CD8-positive, alpha-beta T cell (primary cell): ENCODE measurements at regions of chr11 and their contacts with region 1.

Region 1: GRCh38 chr11:96134602-96135001 is 208.4 kb downstream of the MAML2 start:
- DNase-seq: peak in 2 of 9 experiments; percentile 33 to 65
- ATAC-seq: peak; percentile 17
- H3K4me3 ChIP-seq: no peak overlapping the region
- H3K4me3 Mint-ChIP-seq: no peak overlapping the region
- H3K27ac ChIP-seq: peak overlapping the region in 1 of 2 experiments; percentile 2
- H3K27ac Mint-ChIP-seq: peak overlapping the region; percentile 75
- H3K4me1 ChIP-seq: peaks cover 33% of the 10 kb centered on the region
- H3K4me1 Mint-ChIP-seq: peaks cover 65% of the 10 kb centered on the region
- H3K27me3 ChIP-seq: no peaks in the 10 kb centered on the region
- H3K27me3 Mint-ChIP-seq: no peaks in the 10 kb centered on the region
- CTCF ChIP-seq: no peak

Region 2: DNA sequence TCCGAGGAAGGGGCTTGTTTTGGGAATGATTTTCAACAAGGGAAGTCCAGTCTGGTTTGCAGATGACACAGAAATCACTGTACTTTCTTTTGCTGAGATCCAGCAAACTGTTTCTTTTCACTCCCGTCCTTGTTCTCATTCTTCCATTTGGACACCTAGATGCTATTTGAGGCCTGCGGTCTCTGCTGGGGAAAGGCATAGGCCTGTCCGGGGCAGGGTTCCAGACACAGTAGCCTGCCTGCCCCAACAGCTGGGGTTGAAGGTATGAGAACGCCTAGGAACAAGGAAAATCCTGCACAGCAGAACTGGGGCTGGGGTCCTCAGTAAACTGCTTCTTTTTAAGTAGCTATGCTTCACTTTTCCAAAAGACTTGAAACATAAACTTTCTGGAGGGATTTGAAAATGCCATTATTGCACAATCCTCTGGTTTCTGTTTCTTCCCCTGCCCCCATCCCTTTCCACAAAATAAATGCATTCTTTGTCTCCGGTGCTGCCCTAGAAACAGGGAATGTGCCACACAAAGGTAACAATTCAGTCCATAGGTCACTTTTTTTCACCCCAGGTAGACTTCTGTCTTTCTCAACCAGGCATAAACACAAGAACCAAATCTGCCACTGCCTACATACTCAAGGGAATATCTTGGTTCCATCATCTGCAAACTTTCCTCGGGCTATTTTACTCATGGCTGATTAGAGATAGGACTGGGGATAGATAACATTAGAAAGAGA is 35.9 kb before region 1 on chr11:
- CTCF ChIA-PET with region 1: no interaction called
- POLR2A ChIA-PET with region 1: no interaction called
- intact Hi-C with region 1: loop called in 1 of 2 experiments (anchors 5 kb)
- DNase-seq: no peak
- ATAC-seq: no peak
- H3K4me3 ChIP-seq: no peak overlapping the region
- H3K4me3 Mint-ChIP-seq: no peak overlapping the region
- H3K27ac ChIP-seq: no peak overlapping the region
- H3K27ac Mint-ChIP-seq: peak overlapping the region; percentile 80
- H3K4me1 ChIP-seq: no peaks in the 10 kb centered on the region
- H3K4me1 Mint-ChIP-seq: peaks cover 63% of the 10 kb centered on the region
- H3K27me3 ChIP-seq: no peaks in the 10 kb centered on the region
- H3K27me3 Mint-ChIP-seq: no peaks in the 10 kb centered on the region
- CTCF ChIP-seq: no peak

Region 3: DNA sequence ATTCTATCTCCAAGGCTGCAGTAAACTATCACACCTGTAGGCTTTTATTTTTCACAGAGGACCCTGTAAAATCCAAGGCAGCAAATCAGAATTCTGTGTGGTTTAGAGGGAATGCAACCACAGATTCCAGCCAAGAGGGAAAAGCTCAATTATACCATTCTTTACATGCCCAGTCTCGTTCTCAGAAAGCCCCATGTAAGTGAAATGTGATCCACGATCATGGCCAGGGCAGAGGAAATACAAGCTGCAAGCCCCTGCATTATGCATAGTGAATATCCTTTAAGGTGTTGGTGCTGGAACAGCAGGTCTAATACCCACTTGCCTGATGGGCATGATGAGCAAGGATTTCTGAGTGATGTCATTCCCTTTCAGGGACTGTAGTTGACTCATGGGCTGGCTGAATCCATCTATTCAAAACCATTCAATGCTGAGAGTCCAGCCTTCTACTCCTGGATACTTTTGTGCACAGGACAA is 12.0 kb before region 1 on chr11:
- CTCF ChIA-PET with region 1: no interaction called
- POLR2A ChIA-PET with region 1: no interaction called
- intact Hi-C with region 1: loop called in 1 of 2 experiments (anchors 2 kb)
- DNase-seq: no peak
- ATAC-seq: no peak
- H3K4me3 ChIP-seq: no peak overlapping the region
- H3K4me3 Mint-ChIP-seq: no peak overlapping the region
- H3K27ac ChIP-seq: no peak overlapping the region
- H3K27ac Mint-ChIP-seq: peak overlapping the region; percentile 24
- H3K4me1 ChIP-seq: peaks cover 39% of the 10 kb centered on the region
- H3K4me1 Mint-ChIP-seq: peaks cover 65% of the 10 kb centered on the region
- H3K27me3 ChIP-seq: no peaks in the 10 kb centered on the region
- H3K27me3 Mint-ChIP-seq: no peaks in the 10 kb centered on the region
- CTCF ChIP-seq: no peak

Region 4: DNA sequence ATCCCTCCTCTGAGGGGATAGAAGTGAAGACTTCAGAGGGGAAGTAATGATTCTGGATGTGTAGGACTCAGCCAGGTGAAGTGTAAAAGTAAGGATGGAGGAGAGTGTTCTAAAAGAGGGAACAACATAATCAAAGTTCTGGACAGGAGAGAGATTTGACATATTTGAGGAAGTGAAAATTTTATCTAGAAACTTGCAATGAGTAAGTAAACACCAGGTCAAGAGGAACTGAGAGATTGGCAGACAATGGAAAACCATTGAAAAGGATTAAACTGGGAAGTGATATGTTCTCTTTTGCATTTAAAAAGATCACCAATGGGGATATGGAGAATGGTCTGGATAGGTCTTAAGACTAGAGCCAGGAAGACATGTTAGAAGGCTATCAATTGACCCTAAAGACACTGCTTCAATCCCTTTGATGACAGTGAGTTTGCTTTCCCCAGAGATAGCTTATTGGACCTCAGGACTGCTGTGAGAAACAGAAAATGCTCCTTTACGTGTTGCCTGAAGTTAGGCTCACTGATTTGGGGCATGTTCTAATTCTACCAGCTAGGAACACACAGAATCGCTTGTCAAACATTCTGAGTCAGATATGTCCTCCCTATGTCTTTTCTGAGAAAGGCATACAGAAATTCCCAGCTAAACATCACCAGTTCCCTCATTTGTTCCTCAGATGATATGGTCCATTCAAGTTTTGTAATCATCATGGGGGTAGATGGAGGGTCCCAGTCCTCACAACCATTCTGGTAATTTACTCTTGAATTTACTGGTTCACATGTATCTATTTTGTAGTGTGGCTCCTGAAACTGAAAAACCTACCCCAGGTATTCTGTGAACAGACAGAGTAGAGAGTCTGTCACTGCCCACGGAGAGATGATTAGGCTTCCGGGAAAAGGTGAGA is 63.4 kb after region 1 on chr11:
- CTCF ChIA-PET with region 1: interaction called, 3 read pairs
- POLR2A ChIA-PET with region 1: no interaction called
- intact Hi-C with region 1: loop called in 1 of 2 experiments (anchors 5 kb)
- DNase-seq: no peak
- ATAC-seq: no peak
- H3K4me3 ChIP-seq: no peak overlapping the region
- H3K4me3 Mint-ChIP-seq: no peak overlapping the region
- H3K27ac ChIP-seq: no peak overlapping the region
- H3K27ac Mint-ChIP-seq: peak overlapping the region; percentile 81
- H3K4me1 ChIP-seq: peaks cover 62% of the 10 kb centered on the region
- H3K4me1 Mint-ChIP-seq: peaks cover 85% of the 10 kb centered on the region
- H3K27me3 ChIP-seq: no peaks in the 10 kb centered on the region
- H3K27me3 Mint-ChIP-seq: no peaks in the 10 kb centered on the region
- CTCF ChIP-seq: no peak